Motor neuron (in vitro differentiated cells): ENCODE measurements at regions of chr4 and their contacts with region 1.

Region 1: DNA sequence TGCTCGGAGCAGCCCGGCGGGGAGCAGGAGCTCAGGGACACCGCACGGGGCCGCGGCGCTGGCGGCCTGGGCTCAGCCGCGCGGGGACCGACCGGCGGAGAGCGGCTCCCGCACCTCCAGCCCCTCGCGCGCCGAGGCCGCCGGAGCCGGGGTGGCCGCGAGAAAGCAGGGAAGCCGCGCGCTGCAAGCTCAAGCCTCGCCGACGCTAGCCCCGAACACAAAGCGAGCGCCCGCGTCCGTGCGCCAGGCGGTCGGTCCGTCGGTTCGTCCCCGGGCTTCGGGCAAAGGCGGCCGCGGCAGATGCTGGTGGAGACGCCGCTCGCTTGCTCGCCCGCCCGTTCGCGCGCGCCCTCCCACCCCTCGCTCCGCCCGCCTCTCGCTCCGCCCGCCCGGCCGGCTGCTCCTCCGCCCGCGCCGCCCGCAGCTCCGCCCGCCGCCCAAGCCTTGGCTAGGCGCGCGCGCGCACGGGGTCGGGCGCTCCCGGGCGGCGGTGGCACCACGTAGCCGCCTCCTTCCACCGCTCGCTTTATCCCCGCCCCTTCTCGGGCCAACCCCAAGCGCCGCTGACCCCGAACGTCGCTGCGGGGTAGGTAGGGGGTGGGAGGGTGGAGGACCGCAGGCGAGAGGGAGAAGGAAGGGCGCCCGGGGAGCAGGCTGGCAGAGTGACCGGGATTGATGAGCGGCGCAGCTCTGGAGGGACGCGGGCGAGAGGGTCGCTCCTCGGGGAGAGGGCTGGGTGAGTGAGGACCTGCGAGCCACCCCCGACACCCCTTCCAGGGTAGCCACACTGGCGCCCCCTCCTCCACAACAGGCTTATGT is at the start of gene TSPAN5:
- ATAC-seq: peak; percentile 82 to 91 (median 84)
- H3K4me3 ChIP-seq: peak within 1 kb of the TSS; percentile 49 to 81 (median 70)
- H3K27ac ChIP-seq: peak within 1 kb of the TSS; percentile 70 to 77
- H3K4me1 ChIP-seq: peaks cover 10 to 11% of the 10 kb centered on the region in 2 donors
- total RNA-seq, gene TSPAN5: 1.6 to 70.1 (median 39.0) TPM

Region 2: DNA sequence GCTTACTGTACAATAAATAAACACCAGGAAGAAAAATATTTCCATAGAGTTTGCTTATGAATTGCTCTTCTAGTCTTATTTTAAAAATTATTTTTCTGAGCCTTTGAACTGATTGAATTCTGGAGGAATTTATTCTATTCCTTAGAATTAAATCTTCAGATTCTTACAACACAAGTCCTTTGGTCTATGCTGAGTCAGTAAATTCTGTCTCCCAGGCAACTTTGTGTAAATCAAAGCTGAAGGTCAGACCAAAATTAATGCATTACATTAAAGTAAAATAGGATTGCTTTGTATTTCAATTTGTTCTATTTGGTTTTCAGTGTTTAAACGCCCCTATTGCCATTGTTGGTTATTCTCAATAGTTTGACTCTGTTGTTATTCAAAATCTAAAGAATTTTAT is 488.5 kb before region 1 on chr4:
- in situ Hi-C with region 1: no loop called
- ATAC-seq: peak in 1 of 8 experiments; percentile 38
- H3K4me3 ChIP-seq: no peak overlapping the region
- H3K27ac ChIP-seq: no peak overlapping the region
- H3K4me1 ChIP-seq: peaks cover 5 to 18% of the 10 kb centered on the region in 2 donors

Region 3: DNA sequence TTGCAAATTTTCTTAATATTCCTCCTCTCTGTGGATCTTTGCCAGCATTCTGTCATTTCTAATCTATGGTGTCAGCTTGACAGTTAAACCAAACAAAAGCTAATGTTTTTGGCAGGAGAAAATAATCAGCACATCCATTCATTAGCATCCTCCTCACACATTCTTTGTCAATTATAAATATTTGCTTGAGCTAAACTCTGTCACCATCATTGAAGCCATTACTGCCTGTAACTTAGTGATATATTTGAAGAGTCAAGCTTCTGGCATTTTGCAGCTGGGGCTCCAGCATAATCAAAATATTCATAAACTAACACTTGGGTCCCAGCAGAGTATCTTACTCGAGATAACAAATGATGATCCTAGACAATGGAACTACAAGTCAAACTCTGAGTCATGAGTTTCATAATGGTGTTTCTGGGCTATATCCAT is 144.3 kb after region 1 on chr4:
- in situ Hi-C with region 1: no loop called
- ATAC-seq: peak in 7 of 8 experiments; percentile 47 to 87 (median 77)
- H3K4me3 ChIP-seq: no peak overlapping the region
- H3K27ac ChIP-seq: no peak overlapping the region
- H3K4me1 ChIP-seq: peaks cover 6 to 10% of the 10 kb centered on the region in 2 donors

Region 4: DNA sequence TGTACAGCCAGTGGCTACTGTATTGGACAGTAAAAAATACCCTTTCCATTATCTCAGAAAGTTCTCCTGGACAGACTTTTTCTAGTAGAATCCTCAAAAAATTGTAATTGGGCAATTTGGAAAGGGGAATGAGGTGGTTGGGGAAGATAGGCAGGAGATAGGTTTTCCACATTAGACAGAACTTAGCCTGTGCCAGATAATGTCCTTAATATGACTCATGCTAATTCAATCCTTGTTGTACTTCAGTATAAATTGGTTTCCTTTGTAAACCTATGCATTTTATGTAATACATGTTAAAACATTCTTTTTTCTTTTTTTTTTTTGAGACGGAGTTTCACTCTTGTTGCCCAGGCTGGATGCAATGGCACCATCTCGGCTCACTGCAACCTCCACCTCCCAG is 261.5 kb after region 1 on chr4:
- in situ Hi-C with region 1: loop called in 1 of 9 experiments (anchors 25 kb)
- ATAC-seq: no peak
- H3K4me3 ChIP-seq: no peak overlapping the region
- H3K27ac ChIP-seq: no peak overlapping the region
- H3K4me1 ChIP-seq: no peaks in the 10 kb centered on the region